ENCODE measurements at regions of chr20 and their contacts with region 1.

Region 1: DNA sequence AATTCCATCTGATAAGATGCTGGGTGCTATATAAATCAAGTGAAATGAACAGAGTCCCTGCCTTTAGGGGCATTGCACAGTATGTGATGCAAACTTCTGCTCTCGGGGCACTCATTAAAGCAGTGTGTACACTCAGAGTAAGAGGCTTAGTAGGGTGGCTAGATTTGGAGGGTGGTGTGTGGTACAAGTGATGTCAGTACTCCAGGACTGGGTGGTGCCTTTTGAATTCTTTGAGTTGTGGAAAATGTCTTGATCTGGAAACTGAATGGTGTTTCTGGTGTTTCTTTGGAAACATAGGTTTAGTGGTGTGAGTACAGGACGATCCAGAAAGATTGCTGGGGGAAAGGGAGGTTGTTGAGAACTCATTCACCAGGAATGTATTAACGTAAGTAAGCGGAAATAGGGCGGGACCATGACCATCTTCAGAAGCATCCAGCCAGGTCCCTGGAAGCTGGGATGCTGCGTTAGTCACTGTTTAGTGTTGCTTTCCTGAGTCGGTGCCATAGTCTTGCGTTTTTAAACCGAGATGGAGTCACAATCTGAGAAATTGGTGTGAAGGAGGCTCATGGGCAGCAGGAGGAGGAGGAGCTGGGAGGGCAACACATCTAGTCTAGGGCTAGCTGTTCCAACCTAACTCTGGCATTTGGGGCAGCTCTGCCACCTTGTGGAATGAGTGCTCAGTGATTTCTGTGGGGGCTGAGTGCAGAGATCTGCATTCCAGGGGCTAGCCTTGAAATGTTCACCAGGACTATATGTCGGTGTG is 70.3 kb downstream of the SCAND1 start:
- DNase-seq: peak; percentile 67
- ATAC-seq: peak; percentile 80

Region 2: GRCh38 chr20:35463455-35464300 is 420.3 kb before region 1 on chr20:
- intact Hi-C with region 1: loop called (anchors 10 kb)
- DNase-seq: no peak
- ATAC-seq: peak; percentile 84

Region 3: GRCh38 chr20:35739294-35740163 is 144.4 kb before region 1 on chr20:
- intact Hi-C with region 1: no loop called
- DNase-seq: no peak
- ATAC-seq: no peak

Region 4: GRCh38 chr20:36128463-36129159 is 244.7 kb after region 1 on chr20:
- intact Hi-C with region 1: no loop called
- DNase-seq: no peak
- ATAC-seq: no peak